Esophagus squamous epithelium (tissue), 5 donors: ENCODE measurements at regions of chr1 and their contacts with region 1.

Region 1: DNA sequence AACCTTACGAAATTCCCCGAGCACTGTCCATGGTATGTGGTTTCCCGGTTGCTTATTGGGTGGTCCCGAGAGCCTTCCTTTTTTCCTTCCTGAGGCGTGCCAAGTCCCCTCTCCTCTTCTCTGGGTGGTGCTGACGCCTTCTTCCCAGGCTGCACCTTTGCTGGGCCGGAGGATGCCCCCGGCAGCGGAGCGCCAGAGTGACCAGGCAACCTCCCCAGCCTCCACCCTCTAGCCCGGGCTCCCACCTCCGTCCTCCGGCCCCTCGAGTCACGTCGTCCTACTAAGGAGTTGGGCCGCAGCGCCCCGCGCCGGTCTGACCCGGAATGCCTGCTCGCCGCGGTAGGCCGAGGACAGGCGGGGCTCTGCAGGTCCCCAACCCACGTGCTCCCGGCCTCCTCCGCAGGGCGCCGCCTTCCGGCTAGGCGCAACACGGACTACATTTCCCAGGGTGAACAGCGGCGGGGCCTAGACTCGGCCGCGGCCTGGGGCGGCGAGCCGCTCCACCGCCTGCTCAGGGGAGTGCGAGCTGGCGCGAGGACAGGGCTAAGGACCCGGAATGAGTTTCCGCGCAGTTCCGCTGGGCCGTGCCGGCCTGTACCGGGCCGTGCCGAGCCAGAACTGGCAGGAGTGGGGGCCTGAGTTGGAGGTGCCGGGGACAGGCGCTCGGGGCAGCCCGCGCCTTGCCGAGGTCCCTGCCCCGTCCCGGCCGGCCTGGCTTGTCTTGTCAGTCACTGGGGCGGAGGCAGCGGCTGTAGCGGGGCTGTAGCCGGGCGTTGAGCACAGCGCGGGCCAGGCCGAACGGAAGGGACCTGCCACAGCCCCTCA is at the start of gene IPO13:
- DNase-seq: peak; percentile 67
- H3K4me3 ChIP-seq: peak within 1 kb of the TSS; percentile 69 to 89 (median 79)
- H3K27ac ChIP-seq: peak within 1 kb of the TSS; percentile 95 to 98 (median 98)
- H3K4me1 ChIP-seq: peaks cover 27 to 46% (median 30%) of the 10 kb centered on the region in 3 donors
- H3K27me3 ChIP-seq: no peaks in the 10 kb centered on the region
- CTCF ChIP-seq: peak; percentile 69 to 94 (median 84)
- POLR2A ChIP-seq: peak in 2 of 4 donors; percentile 66 to 79
- total RNA-seq, gene IPO13: 19.3 to 32.4 (median 20.5) TPM

Region 2: DNA sequence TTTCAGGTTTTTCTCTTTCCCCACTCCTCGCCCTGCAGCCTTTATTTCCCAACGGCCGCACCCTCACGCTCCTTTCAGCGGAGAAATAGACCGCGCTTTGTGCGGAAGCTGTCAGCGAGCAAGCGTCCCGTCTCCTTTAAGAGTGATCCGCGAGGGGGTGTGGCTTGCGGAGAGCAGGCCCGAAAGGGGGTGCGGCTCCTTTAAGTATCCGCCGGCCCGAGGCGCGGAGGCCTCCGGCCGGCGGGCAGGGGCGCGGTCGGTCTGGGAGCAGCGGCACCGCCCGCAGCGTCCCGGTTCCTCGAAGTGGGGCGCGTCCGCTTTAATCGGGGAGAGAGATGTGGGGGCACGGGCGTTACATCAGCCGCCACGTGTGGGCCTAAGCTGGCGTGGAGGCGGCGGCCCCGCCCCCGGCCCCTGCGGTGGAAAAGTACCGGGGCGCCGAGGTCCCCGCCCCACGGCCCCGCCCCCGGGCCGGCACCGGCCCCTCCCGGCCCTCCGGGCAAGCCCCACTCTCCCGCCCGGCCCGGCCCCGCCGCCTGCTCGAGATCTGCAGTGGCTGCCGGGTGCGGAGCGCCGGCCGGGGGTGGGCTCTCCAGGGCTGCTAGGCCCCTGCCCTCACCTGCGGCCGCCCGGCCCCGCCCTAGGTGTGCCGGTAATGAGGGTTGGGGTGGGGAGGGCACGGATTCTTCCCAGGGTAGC is 83.6 kb after region 1 on chr1:
- intact Hi-C with region 1: loop called (anchors 10 kb)
- DNase-seq: peak; percentile 58
- H3K4me3 ChIP-seq: peak overlapping the region; percentile 71 to 96 (median 94)
- H3K27ac ChIP-seq: peak overlapping the region; percentile 93 to 99 (median 96)
- H3K4me1 ChIP-seq: peaks cover 42 to 89% (median 53%) of the 10 kb centered on the region in 3 donors
- H3K27me3 ChIP-seq: no peaks in the 10 kb centered on the region
- CTCF ChIP-seq: no peak
- POLR2A ChIP-seq: peak in 2 of 4 donors; percentile 6 to 49

Region 3: DNA sequence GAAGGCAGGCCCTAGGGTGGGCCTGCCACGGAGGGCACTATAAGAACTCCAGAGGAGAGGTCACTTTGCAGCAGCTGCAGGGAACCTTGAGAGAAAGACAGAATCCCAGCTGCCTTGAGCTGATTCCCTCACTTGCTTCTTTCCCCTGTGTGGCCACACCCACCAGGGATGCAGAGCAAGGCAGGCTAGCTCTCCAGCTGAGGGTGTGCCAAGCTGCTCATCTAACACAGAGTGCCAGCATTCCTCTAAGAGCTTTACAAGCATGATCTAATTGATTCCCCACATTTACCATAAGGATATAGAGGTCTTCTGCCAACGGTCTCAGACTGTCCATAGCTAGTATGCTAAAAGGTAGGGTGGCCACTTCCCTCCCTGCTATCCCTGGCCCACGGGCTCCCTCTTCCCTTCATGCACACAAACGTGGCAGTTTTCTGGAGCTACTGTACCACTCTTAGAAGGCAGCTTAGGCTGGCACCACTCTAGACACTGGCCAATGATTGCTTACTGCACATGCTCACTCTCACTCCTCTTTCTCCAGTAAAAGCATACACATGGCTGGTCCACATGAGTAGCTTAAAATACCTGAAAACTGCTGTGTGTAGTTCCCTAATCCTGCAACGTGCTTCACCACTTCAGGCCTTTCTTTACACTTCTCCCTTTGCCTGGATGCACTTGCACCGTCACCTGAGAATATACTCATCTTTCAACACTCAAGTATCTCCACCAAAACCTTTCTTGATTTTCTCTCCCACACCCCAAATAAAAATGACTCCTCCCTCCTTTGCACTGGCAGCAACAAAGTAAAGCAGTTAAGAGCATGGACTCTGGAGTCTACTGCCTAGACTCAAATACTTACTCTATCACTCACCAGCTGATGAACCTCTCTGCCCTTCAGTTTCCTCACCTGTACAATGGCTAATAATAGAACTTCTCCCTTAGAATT is 324.5 kb after region 1 on chr1:
- intact Hi-C with region 1: no loop called
- DNase-seq: no peak
- H3K4me3 ChIP-seq: no peak overlapping the region
- H3K27ac ChIP-seq: no peak overlapping the region
- H3K4me1 ChIP-seq: peaks cover 0 to 8% (median 3%) of the 10 kb centered on the region in 3 donors
- H3K27me3 ChIP-seq: no peaks in the 10 kb centered on the region
- CTCF ChIP-seq: no peak
- POLR2A ChIP-seq: no peak